Transverse colon (tissue), 4 donors: ENCODE measurements at regions of chr16 and their contacts with region 1.

Region 1: GRCh38 chr16:3400779-3401688 is at the starts of genes ZNF174 and ZSCAN32:
- DNase-seq: peak; percentile 99
- H3K4me3 ChIP-seq: peak within 1 kb of the TSS; percentile 70 to 90 (median 80)
- H3K27ac ChIP-seq: peak within 1 kb of the TSS; percentile 88 to 92 (median 90)
- H3K4me1 ChIP-seq: peaks cover 12 to 22% (median 15%) of the 10 kb centered on the region in 4 donors
- H3K27me3 ChIP-seq: no peaks in the 10 kb centered on the region
- CTCF ChIP-seq: no peak
- EP300 ChIP-seq: no peak
- POLR2A ChIP-seq: peak; percentile 77
- total RNA-seq, gene ZNF174: 7.9 to 14.8 (median 11.4) TPM
- total RNA-seq, gene ZSCAN32: 1.00 to 12.7 (median 11.6) TPM

Region 2: DNA sequence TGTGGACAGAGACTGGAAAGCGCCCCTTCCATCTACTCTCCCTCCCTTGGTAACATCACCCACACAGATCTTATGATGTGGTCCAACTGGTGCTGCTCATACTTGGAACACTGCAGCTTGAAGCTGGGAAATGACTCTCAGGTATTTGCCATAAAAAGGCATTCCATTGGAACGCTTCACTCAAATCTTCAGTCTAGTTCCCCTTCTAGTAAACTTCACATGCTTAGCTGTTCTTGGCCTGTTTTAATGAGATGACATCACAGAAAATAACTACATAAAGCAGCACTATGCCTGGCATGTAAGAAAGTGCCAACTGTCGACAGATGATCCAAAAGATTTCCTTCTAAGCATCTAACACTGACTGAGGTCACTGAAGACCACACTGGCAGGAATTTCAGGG is 108.4 kb before region 1 on chr16:
- in situ Hi-C with region 1: loop called in 1 of 4 experiments (anchors 10 kb)
- intact Hi-C with region 1: no loop called
- DNase-seq: no peak
- H3K4me3 ChIP-seq: no peak overlapping the region
- H3K27ac ChIP-seq: no peak overlapping the region
- H3K4me1 ChIP-seq: no peaks in the 10 kb centered on the region
- H3K27me3 ChIP-seq: no peaks in the 10 kb centered on the region
- CTCF ChIP-seq: no peak
- EP300 ChIP-seq: no peak
- POLR2A ChIP-seq: no peak

Region 3: GRCh38 chr16:3305109-3306068 is 95.6 kb before region 1 on chr16 and contains the starts of genes TIGD7 and ZNF75A:
- in situ Hi-C with region 1: loop called in 1 of 4 experiments (anchors 25 kb)
- intact Hi-C with region 1: no loop called
- DNase-seq: peak; percentile 87
- H3K4me3 ChIP-seq: peak within 1 kb of the TSS; percentile 30 to 81 (median 58)
- H3K27ac ChIP-seq: peak within 1 kb of the TSS; percentile 82 to 93 (median 86)
- H3K4me1 ChIP-seq: peaks cover 0 to 25% (median 3%) of the 10 kb centered on the region in 4 donors
- H3K27me3 ChIP-seq: no peaks in the 10 kb centered on the region
- CTCF ChIP-seq: peak in 2 of 5 experiments; percentile 34 to 38
- EP300 ChIP-seq: no peak
- POLR2A ChIP-seq: peak; percentile 89
- total RNA-seq, gene TIGD7: 0.20 to 4.3 (median 2.5) TPM in 3 of 4 donors, not detected in the other
- total RNA-seq, gene ZNF75A: 12.3 to 53.9 (median 25.5) TPM

Region 4: GRCh38 chr16:3457434-3458252 is 56.6 kb after region 1 on chr16:
- in situ Hi-C with region 1: no loop called
- intact Hi-C with region 1: loop called (anchors 2 kb)
- DNase-seq: peak; percentile 90
- H3K4me3 ChIP-seq: peak overlapping the region; percentile 76 to 95 (median 82)
- H3K27ac ChIP-seq: peak overlapping the region; percentile 94 to 99 (median 96)
- H3K4me1 ChIP-seq: peaks cover 30 to 61% (median 43%) of the 10 kb centered on the region in 4 donors
- H3K27me3 ChIP-seq: no peaks in the 10 kb centered on the region
- CTCF ChIP-seq: peak in 4 of 5 experiments; percentile 25 to 59 (median 46)
- EP300 ChIP-seq: no peak
- POLR2A ChIP-seq: peak; percentile 72